ENCODE measurements at regions of chr9 and their contacts with region 1.

Region 1: DNA sequence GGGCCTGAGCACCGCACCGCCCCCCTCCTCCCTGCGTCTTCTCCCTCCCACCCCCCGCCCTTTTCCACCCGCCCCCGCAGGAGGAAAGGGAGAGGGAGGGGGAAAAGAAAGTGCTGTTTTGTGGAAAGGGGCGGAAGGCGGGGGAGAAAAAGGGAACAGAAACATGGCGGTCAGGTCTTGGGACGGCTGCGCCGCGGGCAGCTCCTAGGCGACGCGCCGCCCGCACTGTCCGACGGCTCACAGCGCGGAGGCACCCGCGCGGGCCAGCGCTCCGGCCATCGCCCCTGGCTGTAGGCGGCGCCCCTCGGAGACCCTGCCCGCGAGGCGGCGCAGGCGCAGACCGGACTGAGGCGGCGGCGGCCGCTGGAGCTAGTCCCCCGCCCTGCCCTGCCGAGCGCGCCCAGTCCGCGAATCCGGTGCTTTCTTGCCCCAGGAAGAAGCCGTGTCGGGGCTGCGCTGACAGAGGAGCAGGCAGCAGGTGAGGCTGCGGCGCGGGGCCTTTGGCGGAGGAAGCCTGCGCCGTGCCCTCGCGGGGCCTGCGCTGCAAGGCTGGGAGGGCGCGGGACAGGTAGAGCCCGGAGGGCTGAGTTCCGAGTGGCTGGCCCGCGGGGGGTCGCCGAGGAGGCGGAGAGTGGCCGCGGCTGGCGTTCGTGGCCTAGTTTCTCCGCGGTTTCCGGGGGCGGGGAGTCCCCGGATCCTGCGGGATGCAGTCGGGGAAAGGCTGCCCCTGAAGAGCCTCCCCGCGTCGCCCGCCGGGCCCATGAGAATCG is at the start of gene DENND4C:
- DNase-seq: peak; percentile 86
- H3K4me3 Mint-ChIP-seq: peak within 1 kb of the TSS; percentile 75
- H3K27ac Mint-ChIP-seq: peak within 1 kb of the TSS; percentile 64
- H3K4me1 Mint-ChIP-seq: peaks cover 14% of the 10 kb centered on the region
- H3K27me3 Mint-ChIP-seq: no peaks in the 10 kb centered on the region
- total RNA-seq, gene DENND4C: 47.1 to 52.2 TPM

Region 2: GRCh38 chr9:19102631-19103345 is 127.8 kb before region 1 on chr9 and contains the start of gene HAUS6:
- CTCF ChIA-PET with region 1: interaction called, 4 read pairs
- POLR2A ChIA-PET with region 1: interaction called, 17 read pairs
- DNase-seq: peak; percentile 97
- H3K4me3 Mint-ChIP-seq: peak within 1 kb of the TSS; percentile 82
- H3K27ac Mint-ChIP-seq: peak within 1 kb of the TSS; percentile 93
- H3K4me1 Mint-ChIP-seq: peaks cover 32% of the 10 kb centered on the region
- H3K27me3 Mint-ChIP-seq: no peaks in the 10 kb centered on the region
- total RNA-seq, gene HAUS6: 26.4 to 26.5 TPM

Region 3: GRCh38 chr9:19184144-19184917 is 46.2 kb before region 1 on chr9:
- CTCF ChIA-PET with region 1: interaction called, 7 read pairs
- POLR2A ChIA-PET with region 1: interaction called, 72 read pairs
- DNase-seq: peak; percentile 88
- H3K4me3 Mint-ChIP-seq: peak overlapping the region; percentile 55
- H3K27ac Mint-ChIP-seq: peak overlapping the region; percentile 99
- H3K4me1 Mint-ChIP-seq: peaks cover 41% of the 10 kb centered on the region
- H3K27me3 Mint-ChIP-seq: no peaks in the 10 kb centered on the region

Region 4: DNA sequence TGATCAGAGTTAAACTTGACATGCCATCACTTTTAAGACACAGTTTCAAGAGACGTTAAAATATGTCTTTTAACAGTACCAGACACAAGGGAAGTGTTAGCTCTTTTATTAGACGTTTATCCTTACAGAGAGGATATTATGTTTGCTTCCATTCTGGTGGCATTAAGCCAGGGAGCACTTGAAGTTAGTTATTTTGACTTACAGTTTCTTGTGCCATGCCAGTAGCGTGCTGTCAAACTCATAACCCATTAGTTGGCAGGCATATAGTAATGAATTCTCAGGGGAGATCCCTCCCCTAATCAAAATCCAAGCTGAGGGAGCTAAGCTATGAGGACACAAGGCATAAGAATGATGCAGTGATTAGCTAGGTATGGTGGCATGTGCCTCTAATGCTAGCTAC is 83.0 kb after region 1 on chr9:
- CTCF ChIA-PET with region 1: no interaction called
- POLR2A ChIA-PET with region 1: no interaction called
- DNase-seq: no peak
- H3K4me3 Mint-ChIP-seq: no peak overlapping the region
- H3K27ac Mint-ChIP-seq: no peak overlapping the region
- H3K4me1 Mint-ChIP-seq: no peaks in the 10 kb centered on the region
- H3K27me3 Mint-ChIP-seq: no peaks in the 10 kb centered on the region

Region 5: DNA sequence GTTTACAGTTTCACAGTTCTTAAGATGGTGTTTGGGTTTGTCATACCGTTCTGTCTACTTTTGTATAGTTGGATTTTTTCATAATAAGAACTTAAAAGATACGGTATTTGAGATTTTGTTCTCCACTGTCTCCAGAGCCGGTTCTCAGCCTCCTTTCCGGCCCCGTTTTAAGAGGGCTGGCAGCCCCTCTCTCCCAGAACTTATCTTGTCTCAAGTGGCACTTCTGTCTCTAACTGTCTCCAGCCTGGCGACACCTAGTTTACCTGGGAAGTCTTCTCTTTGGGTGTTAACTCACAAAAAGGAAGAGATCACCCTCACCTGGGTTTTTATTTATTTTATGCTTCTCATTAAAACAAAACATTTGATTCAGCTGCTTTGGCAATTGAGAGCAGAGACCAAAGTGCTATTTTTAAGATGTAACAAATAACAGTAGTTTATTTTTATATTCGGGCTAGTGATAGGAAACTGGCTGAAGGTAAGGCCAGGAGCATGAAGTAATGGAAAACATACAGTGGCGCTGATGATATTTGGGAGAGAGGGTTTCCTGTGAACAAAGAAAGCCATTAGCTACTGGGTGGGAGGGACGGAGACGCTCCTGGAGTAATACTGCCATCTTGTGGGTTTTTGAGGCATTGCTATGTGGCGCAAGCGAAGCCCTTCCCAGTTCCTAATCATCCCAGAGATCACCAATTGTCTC is 226.6 kb after region 1 on chr9:
- CTCF ChIA-PET with region 1: interaction called, 11 read pairs
- POLR2A ChIA-PET with region 1: no interaction called
- DNase-seq: peak; percentile 68
- H3K4me3 Mint-ChIP-seq: peak overlapping the region; percentile 6
- H3K27ac Mint-ChIP-seq: no peak overlapping the region
- H3K4me1 Mint-ChIP-seq: peaks cover 14% of the 10 kb centered on the region
- H3K27me3 Mint-ChIP-seq: no peaks in the 10 kb centered on the region

Measured in activated CD4-positive, alpha-beta memory T cell treated with anti-CD3 and anti-CD28 coated beads, Interleukin-2, amount 10 ng/mL, durations not matched to agents 7 days and 5 days (primary cell).